BJ (cell line): ENCODE measurements at regions of chr22 and their contacts with region 1.

Region 1: DNA sequence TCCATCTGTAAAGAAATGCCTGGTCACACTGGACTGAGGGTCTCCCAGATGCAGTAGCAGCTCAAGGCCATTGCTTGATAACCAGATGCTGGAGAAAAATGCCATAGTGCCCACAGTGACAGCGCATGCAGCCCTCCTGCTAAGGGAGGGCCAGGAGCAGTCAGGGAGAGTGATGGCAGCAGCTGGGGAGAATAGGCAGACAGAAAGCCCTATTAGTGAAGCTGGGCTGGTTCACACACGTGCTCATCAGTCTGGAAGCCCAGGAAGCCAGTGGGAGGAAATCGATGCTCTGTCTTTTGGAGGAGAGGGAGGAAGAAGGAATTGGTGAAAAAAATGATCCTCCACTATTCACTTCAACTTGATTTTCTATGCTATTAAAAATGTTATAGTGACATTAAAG is 82.9 kb downstream of the OSBP2 start:
- DNase-seq: no peak
- H3K4me3 ChIP-seq: no peak overlapping the region
- H3K27me3 ChIP-seq: no peaks in the 10 kb centered on the region
- CTCF ChIP-seq: no peak

Region 2: DNA sequence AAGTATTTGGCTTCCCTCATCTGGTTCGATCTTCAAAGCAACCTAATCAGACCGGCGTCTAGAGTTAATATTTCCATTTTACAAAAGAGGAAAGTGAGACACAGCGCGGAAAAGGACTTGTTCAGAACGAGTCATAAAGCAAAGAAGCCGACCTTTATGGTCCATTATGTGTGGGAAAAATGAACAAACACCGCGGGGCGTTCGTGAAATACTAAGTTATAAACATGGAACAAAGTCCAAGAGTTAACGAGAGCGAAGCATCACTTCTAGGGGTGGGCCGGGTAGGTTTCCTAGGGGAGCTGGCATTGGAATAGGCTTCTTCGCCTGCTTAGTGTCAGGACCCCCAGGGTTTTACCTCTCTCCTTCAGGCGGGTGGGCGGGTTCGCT is 110.5 kb before region 1 on chr22:
- CTCF ChIA-PET with region 1: no interaction called
- POLR2A ChIA-PET with region 1: no interaction called
- DNase-seq: no peak
- H3K4me3 ChIP-seq: peak overlapping the region; percentile 75
- H3K27me3 ChIP-seq: no peaks in the 10 kb centered on the region
- CTCF ChIP-seq: no peak

Region 3: DNA sequence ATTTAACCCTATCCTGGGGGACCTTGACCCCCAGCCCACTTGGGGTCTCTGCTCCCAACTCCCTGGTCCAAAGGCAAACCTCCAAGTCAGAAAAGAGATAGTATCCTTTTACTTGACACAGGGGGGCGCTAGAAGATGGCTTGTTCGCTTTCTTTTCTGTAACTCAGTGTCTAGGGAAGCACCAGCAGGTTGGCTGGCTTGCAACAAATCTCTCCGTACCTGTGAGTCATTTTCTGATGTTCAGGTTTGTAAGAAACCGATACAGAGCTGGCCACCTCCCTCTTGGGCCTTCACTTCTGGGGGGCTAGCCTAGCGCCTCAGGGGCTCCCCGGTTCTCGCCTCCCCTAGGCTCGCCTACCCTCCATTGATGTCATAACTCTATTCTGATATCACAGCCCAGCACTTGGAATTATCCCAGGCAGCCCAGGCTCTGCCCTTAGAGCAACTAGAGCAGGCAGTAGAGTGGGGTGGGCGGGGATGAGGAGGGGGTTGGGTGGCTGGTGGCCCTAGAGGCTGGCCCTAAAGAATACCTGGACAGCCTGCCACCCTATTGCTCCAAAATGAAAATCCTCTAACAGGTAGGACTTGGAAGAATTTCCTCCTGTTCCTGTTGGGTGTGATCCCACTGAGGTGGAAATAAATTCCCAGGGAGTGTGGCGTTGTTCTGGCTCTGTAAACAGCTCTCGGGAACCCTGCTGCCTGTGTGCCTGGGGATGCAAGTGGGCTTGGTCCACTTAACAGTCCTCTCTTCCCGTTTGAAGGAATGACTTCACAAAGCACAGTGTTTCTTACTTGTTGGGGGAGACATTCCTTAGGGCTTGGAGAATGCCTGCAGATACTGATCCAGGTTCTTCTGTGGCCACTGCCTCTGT is 13.5 kb before region 1 on chr22:
- CTCF ChIA-PET with region 1: interaction called, 13 read pairs
- POLR2A ChIA-PET with region 1: no interaction called
- DNase-seq: peak; percentile 18
- H3K4me3 ChIP-seq: no peak overlapping the region
- H3K27me3 ChIP-seq: no peaks in the 10 kb centered on the region
- CTCF ChIP-seq: peak; percentile 70